ENCODE measurements at regions of chr6 and their contacts with region 1.

Region 1: GRCh38 chr6:2127484-2127911 is 117.9 kb downstream of the GMDS start:
- DNase-seq: no peak
- H3K4me3 Mint-ChIP-seq: no peak overlapping the region
- H3K27ac Mint-ChIP-seq: peak overlapping the region; percentile 77
- H3K4me1 Mint-ChIP-seq: peaks cover 34% of the 10 kb centered on the region
- H3K27me3 Mint-ChIP-seq: peaks cover 5% of the 10 kb centered on the region

Region 2: GRCh38 chr6:2081155-2082138 is 46.1 kb before region 1 on chr6:
- intact Hi-C with region 1: loop called (anchors 2 kb)
- DNase-seq: peak; percentile 14
- H3K4me3 Mint-ChIP-seq: no peak overlapping the region
- H3K27ac Mint-ChIP-seq: peak overlapping the region; percentile 24
- H3K4me1 Mint-ChIP-seq: peaks cover 37% of the 10 kb centered on the region
- H3K27me3 Mint-ChIP-seq: peaks cover 24% of the 10 kb centered on the region

Region 3: GRCh38 chr6:2116496-2116895 is 11.0 kb before region 1 on chr6:
- intact Hi-C with region 1: loop called (anchors 1 kb)
- DNase-seq: no peak
- H3K4me3 Mint-ChIP-seq: no peak overlapping the region
- H3K27ac Mint-ChIP-seq: no peak overlapping the region
- H3K4me1 Mint-ChIP-seq: peaks cover 15% of the 10 kb centered on the region
- H3K27me3 Mint-ChIP-seq: peaks cover 6% of the 10 kb centered on the region

Region 4: GRCh38 chr6:2158596-2159271 is 31.2 kb after region 1 on chr6:
- intact Hi-C with region 1: loop called (anchors 1 kb)
- DNase-seq: no peak
- H3K4me3 Mint-ChIP-seq: no peak overlapping the region
- H3K27ac Mint-ChIP-seq: no peak overlapping the region
- H3K4me1 Mint-ChIP-seq: peaks cover 41% of the 10 kb centered on the region
- H3K27me3 Mint-ChIP-seq: peaks cover 18% of the 10 kb centered on the region

Measured in activated T-helper 2 cell treated with anti-CD3 and anti-CD28 coated beads, Interferon-gamma antibody, Interleukin-2, Interleukin-4, amounts not matched to agents 10 μg/mL and 5 μg/mL and 100 μg/mL, durations not matched to agents 14 hours and 24 hours and 36 hours (primary cell).